ENCODE measurements at regions of chr9 and their contacts with region 1.

Region 1: GRCh38 chr9:115591584-115591984 is 473.6 kb upstream of the TNC start:
- DNase-seq: peak; percentile 83 to 97
- ATAC-seq: peak; percentile 89 to 92
- H3K4me3 ChIP-seq: no peak overlapping the region
- H3K27ac ChIP-seq: peak overlapping the region; percentile 89 to 93
- H3K4me1 ChIP-seq: peaks cover 65% of the 10 kb centered on the region
- CTCF ChIP-seq: peak; percentile 95
- EP300 ChIP-seq: peak in 1 of 2 experiments; percentile 74; a peak in 2 of 5 replicates
- POLR2A ChIP-seq: no peak
- RAD21 ChIP-seq: peak; percentile 97 to 99

Region 2: GRCh38 chr9:115058684-115059315 is 532.8 kb before region 1 on chr9:
- CTCF ChIA-PET with region 1: no interaction called
- POLR2A ChIA-PET with region 1: no interaction called
- DNase-seq: no peak
- ATAC-seq: peak; percentile 44 to 63; a peak in 2 of 6 replicates
- H3K4me3 ChIP-seq: no peak overlapping the region
- H3K27ac ChIP-seq: peak overlapping the region in 1 of 2 experiments; percentile 29; a peak in 2 of 6 replicates
- H3K4me1 ChIP-seq: peaks cover 22% of the 10 kb centered on the region
- CTCF ChIP-seq: no peak
- EP300 ChIP-seq: no peak
- POLR2A ChIP-seq: no peak
- RAD21 ChIP-seq: no peak

Region 3: GRCh38 chr9:115604831-115605483 is 13.4 kb after region 1 on chr9:
- CTCF ChIA-PET with region 1: interaction called, 118 read pairs
- POLR2A ChIA-PET with region 1: no interaction called
- DNase-seq: peak in 1 of 2 experiments; percentile 26
- ATAC-seq: peak in 1 of 2 experiments; percentile 52; a peak in 2 of 6 replicates
- H3K4me3 ChIP-seq: no peak overlapping the region
- H3K27ac ChIP-seq: peak overlapping the region; percentile 23 to 59; a peak in 4 of 6 replicates
- H3K4me1 ChIP-seq: no peaks in the 10 kb centered on the region
- CTCF ChIP-seq: no peak
- EP300 ChIP-seq: no peak
- POLR2A ChIP-seq: no peak
- RAD21 ChIP-seq: no peak

Region 4: DNA sequence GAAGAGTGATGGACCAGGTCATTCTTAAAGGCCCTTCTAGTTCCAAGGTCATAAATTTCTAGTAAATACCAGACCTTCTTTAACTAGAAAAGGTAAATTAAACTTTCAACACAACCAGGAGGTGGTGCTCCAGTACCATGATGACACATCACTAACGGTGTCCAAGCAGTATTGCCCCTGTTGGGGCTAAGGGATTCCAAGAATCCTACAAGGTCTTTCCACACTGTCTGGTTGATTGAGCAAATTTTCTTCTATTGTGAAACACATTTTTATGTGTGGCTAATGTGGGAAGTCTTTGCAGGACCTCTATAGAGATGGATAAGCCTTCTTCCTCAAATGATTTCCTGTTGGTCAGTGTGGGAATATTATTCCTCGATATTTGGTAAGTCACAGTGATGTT is 102.4 kb after region 1 on chr9:
- CTCF ChIA-PET with region 1: interaction called, 88 read pairs
- POLR2A ChIA-PET with region 1: no interaction called
- DNase-seq: peak; percentile 22 to 93
- ATAC-seq: peak; percentile 92
- H3K4me3 ChIP-seq: no peak overlapping the region
- H3K27ac ChIP-seq: peak overlapping the region; percentile 75 to 86
- H3K4me1 ChIP-seq: peaks cover 31% of the 10 kb centered on the region
- CTCF ChIP-seq: peak; percentile 78
- EP300 ChIP-seq: peak; percentile 81 to 87; a peak in 3 of 5 replicates
- POLR2A ChIP-seq: no peak
- RAD21 ChIP-seq: peak; percentile 91 to 97

Region 5: DNA sequence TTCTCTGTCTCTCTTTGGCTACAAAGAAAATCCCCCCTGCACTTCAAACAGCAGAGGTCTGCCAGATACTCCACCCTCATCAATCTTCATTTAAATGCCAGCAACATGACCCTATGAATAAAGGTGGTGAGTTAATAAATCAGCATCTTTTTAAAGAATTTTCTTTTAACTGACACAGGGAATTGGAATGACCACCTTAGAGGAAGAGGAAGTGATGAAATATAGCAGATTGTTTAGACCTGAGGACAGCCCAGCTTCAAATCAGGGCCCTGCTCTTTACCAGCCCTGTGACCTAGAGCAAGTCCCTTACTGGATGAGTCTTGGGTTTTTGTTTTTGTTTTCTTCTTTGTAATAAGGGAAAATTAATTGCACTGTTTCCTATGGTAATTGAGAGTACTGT is 338.9 kb after region 1 on chr9:
- CTCF ChIA-PET with region 1: interaction called, 11 read pairs
- POLR2A ChIA-PET with region 1: no interaction called
- DNase-seq: no peak
- ATAC-seq: peak in 1 of 2 experiments; percentile 77; a peak in 3 of 6 replicates
- H3K4me3 ChIP-seq: no peak overlapping the region
- H3K27ac ChIP-seq: peak overlapping the region; percentile 60 to 78
- H3K4me1 ChIP-seq: peaks cover 9% of the 10 kb centered on the region
- CTCF ChIP-seq: no peak
- EP300 ChIP-seq: no peak
- POLR2A ChIP-seq: no peak
- RAD21 ChIP-seq: no peak

Region 6: GRCh38 chr9:115972843-115973595 is 381.4 kb after region 1 on chr9:
- CTCF ChIA-PET with region 1: interaction called, 13 read pairs
- POLR2A ChIA-PET with region 1: no interaction called
- DNase-seq: peak in 1 of 2 experiments; percentile 86
- ATAC-seq: peak; percentile 80 to 88
- H3K4me3 ChIP-seq: no peak overlapping the region
- H3K27ac ChIP-seq: peak overlapping the region; percentile 88 to 89
- H3K4me1 ChIP-seq: peaks cover 45% of the 10 kb centered on the region
- CTCF ChIP-seq: no peak
- EP300 ChIP-seq: peak; percentile 94 to 96
- POLR2A ChIP-seq: no peak
- RAD21 ChIP-seq: peak; percentile 9 to 71; a peak in 3 of 5 replicates

Region 7: DNA sequence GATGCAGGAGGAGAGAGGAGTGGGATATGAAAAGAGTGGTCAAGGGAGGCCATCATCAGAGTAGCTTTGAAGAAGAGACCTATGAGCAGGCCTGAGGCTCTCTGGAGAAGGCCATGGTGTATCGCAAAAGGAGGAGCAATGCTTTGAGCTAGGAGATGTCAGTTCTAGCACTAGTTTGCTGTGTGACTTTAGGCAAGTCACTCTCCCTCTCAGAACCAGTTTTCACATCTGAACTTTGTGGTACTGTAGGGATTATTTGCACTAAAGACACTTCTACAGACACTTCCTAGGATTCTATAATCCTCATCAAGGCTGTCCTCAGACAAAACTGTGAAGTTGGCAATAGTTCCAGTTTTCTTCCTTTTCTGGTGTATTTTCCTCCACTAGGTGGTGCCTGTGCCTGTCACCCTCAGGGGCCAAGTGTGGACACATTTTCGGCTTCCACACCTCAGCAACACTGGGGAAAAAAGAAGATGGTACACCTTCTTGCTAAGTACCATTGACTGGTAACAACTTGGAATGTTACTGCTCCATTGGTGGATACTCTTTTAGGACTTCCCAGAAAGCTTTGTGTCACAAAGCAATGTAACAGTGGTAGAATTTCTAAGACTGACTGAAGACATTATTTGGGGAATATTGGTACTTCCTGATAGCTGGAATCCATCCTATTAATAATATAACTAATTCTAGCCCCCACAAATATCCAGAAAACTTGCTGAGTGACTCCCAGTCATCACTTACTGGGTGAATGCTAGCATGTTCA is 571.9 kb after region 1 on chr9:
- CTCF ChIA-PET with region 1: interaction called, 70 read pairs
- POLR2A ChIA-PET with region 1: interaction called, 5 read pairs
- DNase-seq: no peak
- ATAC-seq: no peak
- H3K4me3 ChIP-seq: no peak overlapping the region
- H3K27ac ChIP-seq: peak overlapping the region; percentile 80 to 99; a peak in 5 of 6 replicates
- H3K4me1 ChIP-seq: peaks cover 100% of the 10 kb centered on the region
- CTCF ChIP-seq: peak; percentile 38; the same call in 2 of the 3 replicates
- EP300 ChIP-seq: no peak
- POLR2A ChIP-seq: no peak
- RAD21 ChIP-seq: peak; percentile 15 to 19; a peak in 1 of 5 replicates

Region 8: DNA sequence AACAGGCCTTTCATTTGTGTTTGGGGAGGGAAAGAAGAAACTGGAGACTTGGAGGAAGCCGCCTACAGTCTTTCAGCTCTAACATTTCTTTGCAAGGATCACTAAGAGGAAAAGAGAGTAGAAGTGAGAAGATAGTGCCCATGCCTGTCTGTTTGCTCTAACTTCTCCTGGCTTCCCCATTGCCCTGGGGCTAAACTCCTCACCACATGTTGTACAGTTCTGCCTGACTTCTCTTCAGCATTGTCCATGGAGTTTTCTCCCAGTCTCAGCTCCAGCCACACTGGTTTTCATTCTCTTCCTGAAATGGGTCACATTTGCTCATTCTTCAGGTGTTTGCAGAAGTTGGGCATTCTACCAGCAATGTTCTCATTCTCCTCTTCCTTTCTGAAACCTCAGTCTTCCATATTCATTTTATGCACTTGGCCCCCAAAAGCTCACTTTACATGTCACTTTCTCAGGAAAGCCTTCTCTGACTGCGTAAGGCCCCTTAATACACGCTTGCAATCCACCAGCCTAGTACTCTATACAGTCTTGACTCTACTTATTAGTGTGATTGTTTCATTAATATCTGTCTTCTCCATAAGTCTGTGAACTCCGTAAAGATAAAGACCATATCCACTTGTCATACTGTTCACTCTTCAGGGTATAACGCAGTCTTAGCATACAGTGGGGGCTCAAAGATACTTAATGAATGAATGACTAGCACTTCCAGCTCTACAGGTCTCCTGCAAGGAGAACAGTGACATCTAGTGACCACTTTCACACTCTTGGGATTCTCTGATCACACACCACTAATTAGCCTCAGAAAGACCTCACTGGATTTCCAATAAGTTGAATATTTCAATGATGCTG is 1055.3 kb after region 1 on chr9:
- CTCF ChIA-PET with region 1: interaction called, 79 read pairs
- POLR2A ChIA-PET with region 1: no interaction called
- DNase-seq: peak; percentile 21 to 53
- ATAC-seq: peak; percentile 90 to 95
- H3K4me3 ChIP-seq: no peak overlapping the region
- H3K27ac ChIP-seq: peak overlapping the region; percentile 47 to 64
- H3K4me1 ChIP-seq: peaks cover 7% of the 10 kb centered on the region; the same call in 2 of the 3 replicates
- CTCF ChIP-seq: peak; percentile 91
- EP300 ChIP-seq: no peak
- POLR2A ChIP-seq: no peak
- RAD21 ChIP-seq: peak; percentile 82 to 84

Measured in A549 (cell line).